Activated CD4-positive, alpha-beta T cell treated with anti-CD3 and anti-CD28 coated beads for 36 hours (primary cell): ENCODE measurements at regions of chr15 and their contacts with region 1.

Region 1: GRCh38 chr15:22780267-22780666 is 6.2 kb upstream of the NIPA1 start:
- DNase-seq: peak; percentile 35
- ATAC-seq: peak; percentile 92
- H3K4me3 Mint-ChIP-seq: no peak overlapping the region
- H3K27ac Mint-ChIP-seq: peak overlapping the region; percentile 24
- H3K4me1 Mint-ChIP-seq: peaks cover 41% of the 10 kb centered on the region
- H3K27me3 Mint-ChIP-seq: no peaks in the 10 kb centered on the region

Region 2: GRCh38 chr15:22795206-22796063 is 15.2 kb after region 1 on chr15:
- CTCF ChIA-PET with region 1: interaction called, 5 read pairs
- POLR2A ChIA-PET with region 1: no interaction called
- intact Hi-C with region 1: loop called in 1 of 2 experiments (anchors 2 kb)
- DNase-seq: no peak
- ATAC-seq: no peak
- H3K4me3 Mint-ChIP-seq: no peak overlapping the region
- H3K27ac Mint-ChIP-seq: no peak overlapping the region
- H3K4me1 Mint-ChIP-seq: peaks cover 56% of the 10 kb centered on the region
- H3K27me3 Mint-ChIP-seq: no peaks in the 10 kb centered on the region

Region 3: GRCh38 chr15:22952796-22953579 is 172.7 kb after region 1 on chr15:
- CTCF ChIA-PET with region 1: no interaction called
- POLR2A ChIA-PET with region 1: no interaction called
- intact Hi-C with region 1: no loop called
- DNase-seq: no peak
- ATAC-seq: no peak
- H3K4me3 Mint-ChIP-seq: no peak overlapping the region
- H3K27ac Mint-ChIP-seq: no peak overlapping the region
- H3K4me1 Mint-ChIP-seq: peaks cover 12% of the 10 kb centered on the region
- H3K27me3 Mint-ChIP-seq: peaks cover 12% of the 10 kb centered on the region

Region 4: GRCh38 chr15:22989576-22990477 is 209.6 kb after region 1 on chr15:
- CTCF ChIA-PET with region 1: no interaction called
- POLR2A ChIA-PET with region 1: no interaction called
- intact Hi-C with region 1: no loop called
- DNase-seq: no peak
- ATAC-seq: no peak
- H3K4me3 Mint-ChIP-seq: no peak overlapping the region
- H3K27ac Mint-ChIP-seq: no peak overlapping the region
- H3K4me1 Mint-ChIP-seq: no peaks in the 10 kb centered on the region
- H3K27me3 Mint-ChIP-seq: no peaks in the 10 kb centered on the region